PC-9 (cell line): ENCODE measurements at regions of chr6 and their contacts with region 1.

Region 1: DNA sequence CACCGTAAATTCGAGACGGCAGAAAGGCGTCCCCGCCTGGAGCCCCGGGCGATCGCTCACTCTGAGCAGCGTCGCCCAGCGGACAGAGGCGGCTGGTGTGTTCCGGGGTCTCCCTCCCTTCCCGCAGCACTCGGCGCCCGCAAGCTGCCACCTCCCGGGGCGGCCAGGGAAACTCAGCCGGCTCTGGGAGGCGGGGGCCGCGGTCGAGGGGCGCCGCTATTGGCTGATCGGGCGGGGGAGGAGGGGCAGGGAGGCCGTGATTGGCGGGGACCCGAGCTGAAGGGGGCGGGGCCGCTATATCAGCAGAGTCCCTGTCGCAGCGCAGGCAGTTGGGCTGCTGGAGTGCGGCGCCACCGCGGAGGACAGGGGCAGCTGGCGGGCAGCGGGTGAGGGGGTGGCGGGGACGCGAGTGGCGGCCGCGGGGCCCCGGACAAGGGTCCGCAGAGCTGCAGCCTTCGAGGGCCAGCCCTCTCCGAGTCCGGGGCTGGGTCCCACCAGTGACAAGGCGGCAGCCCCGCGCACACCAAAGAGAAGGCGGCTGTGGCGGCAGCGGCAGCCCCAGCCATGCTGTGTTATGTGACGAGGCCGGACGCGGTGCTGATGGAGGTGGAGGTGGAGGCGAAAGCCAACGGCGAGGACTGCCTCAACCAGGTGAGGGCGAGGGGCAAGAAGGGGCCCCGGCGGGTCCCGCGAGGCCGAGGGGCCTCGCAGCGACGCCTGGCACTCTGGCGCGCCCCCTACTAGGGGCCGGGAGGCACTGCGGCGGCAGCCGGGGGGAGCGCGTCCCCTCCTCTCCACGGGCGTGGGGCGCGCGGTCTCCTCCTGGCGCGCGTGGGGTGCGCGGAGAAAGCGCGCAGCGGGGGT is at the start of gene MYLIP:
- DNase-seq: peak; percentile 84 to 97
- H3K4me3 ChIP-seq: peak within 1 kb of the TSS; percentile 91
- H3K27ac ChIP-seq: peak within 1 kb of the TSS; percentile 87
- H3K4me1 ChIP-seq: peaks cover 28% of the 10 kb centered on the region
- H3K27me3 ChIP-seq: peaks cover 6% of the 10 kb centered on the region; the same call in 1 of the 2 replicates
- CTCF ChIP-seq: peak; percentile 68
- total RNA-seq, gene MYLIP: 29.2 and 42.2 TPM in 2 replicates

Region 2: DNA sequence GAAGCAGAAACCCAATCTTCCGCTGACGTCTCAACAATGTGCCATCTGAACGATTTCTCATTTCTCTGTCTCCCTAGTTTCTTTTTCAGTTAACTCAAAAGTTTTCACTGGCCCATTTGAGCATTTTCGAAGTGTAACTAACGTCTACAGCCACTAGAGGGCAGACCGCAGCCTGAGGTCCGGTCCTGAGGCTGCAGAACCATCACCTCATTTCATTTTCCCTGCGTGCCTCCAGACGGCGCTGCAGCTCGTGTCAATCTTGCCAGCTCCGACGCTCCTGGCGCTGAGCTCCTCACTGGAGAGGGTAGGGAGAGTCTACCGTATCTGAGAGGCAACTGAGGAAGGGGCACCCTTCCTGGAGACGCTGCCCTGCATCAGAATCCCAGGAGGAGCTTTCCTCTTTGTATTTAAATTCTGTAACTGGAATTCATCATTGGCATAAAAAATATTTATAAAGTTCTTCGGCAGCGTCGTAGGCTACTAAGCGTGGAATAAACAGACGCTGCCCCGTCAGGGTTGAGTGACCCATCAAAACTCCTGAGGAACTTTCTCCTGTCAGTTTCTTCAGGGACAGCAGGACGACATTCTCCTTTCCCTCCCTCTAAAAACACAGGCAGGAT is 437.6 kb before region 1 on chr6:
- CTCF ChIA-PET with region 1: interaction called, 11 read pairs
- POLR2A ChIA-PET with region 1: interaction called, 14 read pairs
- intact Hi-C with region 1: loop called (anchors 2 kb)
- DNase-seq: peak; percentile 69 to 72
- H3K4me3 ChIP-seq: no peak overlapping the region
- H3K27ac ChIP-seq: no peak overlapping the region
- H3K4me1 ChIP-seq: no peaks in the 10 kb centered on the region
- H3K27me3 ChIP-seq: peaks cover 28% of the 10 kb centered on the region
- CTCF ChIP-seq: peak; percentile 97

Region 3: DNA sequence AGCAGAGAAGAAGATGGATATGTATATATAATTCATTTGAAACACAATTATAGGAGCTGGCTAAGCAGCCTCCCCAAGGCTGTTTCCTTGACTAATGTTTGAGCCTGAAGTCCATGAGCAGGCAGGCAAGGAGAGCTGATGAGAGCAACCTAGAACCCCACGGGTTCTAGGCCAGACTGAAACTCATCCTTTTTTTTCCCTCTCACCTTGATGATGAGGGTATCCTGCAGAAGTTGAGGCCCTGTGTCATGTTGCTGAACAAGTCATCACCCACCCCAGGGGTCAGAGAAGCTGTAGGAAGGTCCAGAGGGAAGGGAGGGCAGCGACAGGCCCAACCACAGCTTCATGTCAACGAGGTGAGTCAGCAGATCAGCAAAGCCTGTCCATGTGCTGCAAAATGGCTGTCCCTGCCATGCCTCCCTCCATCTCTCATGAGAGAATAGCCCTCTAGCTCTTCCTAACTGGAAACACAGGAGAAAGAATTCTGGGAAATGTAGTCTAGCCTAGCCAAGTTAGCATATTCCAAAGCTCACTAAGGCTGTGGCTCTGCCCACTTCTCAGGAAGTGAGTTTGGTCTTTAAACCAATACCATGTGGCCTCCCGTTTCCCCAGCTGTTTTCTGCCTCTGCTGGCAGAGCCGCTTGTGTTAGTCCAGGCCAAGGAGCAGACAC is 374.8 kb before region 1 on chr6:
- CTCF ChIA-PET with region 1: no interaction called
- POLR2A ChIA-PET with region 1: interaction called, 10 read pairs
- intact Hi-C with region 1: no loop called
- DNase-seq: peak in 1 of 2 experiments; percentile 27
- H3K4me3 ChIP-seq: no peak overlapping the region
- H3K27ac ChIP-seq: no peak overlapping the region
- H3K4me1 ChIP-seq: no peaks in the 10 kb centered on the region
- H3K27me3 ChIP-seq: peaks cover 36% of the 10 kb centered on the region
- CTCF ChIP-seq: no peak

Region 4: GRCh38 chr6:15870333-15871043 is 258.5 kb before region 1 on chr6:
- CTCF ChIA-PET with region 1: interaction called, 14 read pairs
- POLR2A ChIA-PET with region 1: no interaction called
- intact Hi-C with region 1: no loop called
- DNase-seq: no peak
- H3K4me3 ChIP-seq: no peak overlapping the region
- H3K27ac ChIP-seq: no peak overlapping the region
- H3K4me1 ChIP-seq: no peaks in the 10 kb centered on the region
- H3K27me3 ChIP-seq: peaks cover 60% of the 10 kb centered on the region
- CTCF ChIP-seq: no peak

Region 5: GRCh38 chr6:16004934-16005679 is 123.9 kb before region 1 on chr6:
- CTCF ChIA-PET with region 1: no interaction called
- POLR2A ChIA-PET with region 1: no interaction called
- intact Hi-C with region 1: no loop called
- DNase-seq: no peak
- H3K4me3 ChIP-seq: no peak overlapping the region
- H3K27ac ChIP-seq: no peak overlapping the region
- H3K4me1 ChIP-seq: no peaks in the 10 kb centered on the region
- H3K27me3 ChIP-seq: peaks cover 76% of the 10 kb centered on the region
- CTCF ChIP-seq: no peak

Region 6: GRCh38 chr6:16056263-16056870 is 72.6 kb before region 1 on chr6:
- CTCF ChIA-PET with region 1: no interaction called
- POLR2A ChIA-PET with region 1: interaction called, 13 read pairs
- intact Hi-C with region 1: no loop called
- DNase-seq: no peak
- H3K4me3 ChIP-seq: no peak overlapping the region
- H3K27ac ChIP-seq: no peak overlapping the region
- H3K4me1 ChIP-seq: no peaks in the 10 kb centered on the region
- H3K27me3 ChIP-seq: peaks cover 85% of the 10 kb centered on the region
- CTCF ChIP-seq: no peak

Region 7: GRCh38 chr6:16183187-16183664 is 54.2 kb after region 1 on chr6:
- CTCF ChIA-PET with region 1: no interaction called
- POLR2A ChIA-PET with region 1: interaction called, 29 read pairs
- intact Hi-C with region 1: no loop called
- DNase-seq: no peak
- H3K4me3 ChIP-seq: no peak overlapping the region
- H3K27ac ChIP-seq: no peak overlapping the region
- H3K4me1 ChIP-seq: no peaks in the 10 kb centered on the region
- H3K27me3 ChIP-seq: peaks cover 53% of the 10 kb centered on the region
- CTCF ChIP-seq: peak; percentile 70

Region 8: DNA sequence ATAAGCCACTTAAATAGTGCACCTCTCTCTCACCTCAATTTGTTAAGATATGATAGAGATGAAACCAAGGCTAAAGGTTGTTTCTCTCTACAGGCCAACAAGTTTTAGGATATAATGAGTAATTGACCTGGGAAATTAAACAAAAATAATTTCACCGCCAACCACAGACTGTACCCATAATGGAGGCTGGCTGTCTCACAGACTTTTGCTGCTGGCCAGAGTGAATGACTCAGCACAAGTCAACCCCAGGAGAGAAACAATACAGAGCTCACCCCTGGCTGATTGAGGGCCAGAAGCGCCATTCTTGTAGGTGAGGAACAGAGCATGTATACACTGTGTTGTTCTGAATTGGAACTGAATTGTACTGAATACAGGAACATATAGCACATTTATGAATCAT is 1364.3 kb after region 1 on chr6:
- CTCF ChIA-PET with region 1: no interaction called
- POLR2A ChIA-PET with region 1: interaction called, 15 read pairs
- intact Hi-C with region 1: no loop called
- DNase-seq: peak in 1 of 2 experiments; percentile 8
- H3K4me3 ChIP-seq: no peak overlapping the region
- H3K27ac ChIP-seq: no peak overlapping the region
- H3K4me1 ChIP-seq: no peaks in the 10 kb centered on the region
- H3K27me3 ChIP-seq: no peaks in the 10 kb centered on the region
- CTCF ChIP-seq: no peak